Dendritic cell treated with granulocyte-macrophage colony-stimulating factor and Interleukin-4, amounts not matched to agents 40 ng/mL and 50 ng/mL, for 4 days (primary cell): ENCODE measurements at regions of chr3 and their contacts with region 1.

Region 1: DNA sequence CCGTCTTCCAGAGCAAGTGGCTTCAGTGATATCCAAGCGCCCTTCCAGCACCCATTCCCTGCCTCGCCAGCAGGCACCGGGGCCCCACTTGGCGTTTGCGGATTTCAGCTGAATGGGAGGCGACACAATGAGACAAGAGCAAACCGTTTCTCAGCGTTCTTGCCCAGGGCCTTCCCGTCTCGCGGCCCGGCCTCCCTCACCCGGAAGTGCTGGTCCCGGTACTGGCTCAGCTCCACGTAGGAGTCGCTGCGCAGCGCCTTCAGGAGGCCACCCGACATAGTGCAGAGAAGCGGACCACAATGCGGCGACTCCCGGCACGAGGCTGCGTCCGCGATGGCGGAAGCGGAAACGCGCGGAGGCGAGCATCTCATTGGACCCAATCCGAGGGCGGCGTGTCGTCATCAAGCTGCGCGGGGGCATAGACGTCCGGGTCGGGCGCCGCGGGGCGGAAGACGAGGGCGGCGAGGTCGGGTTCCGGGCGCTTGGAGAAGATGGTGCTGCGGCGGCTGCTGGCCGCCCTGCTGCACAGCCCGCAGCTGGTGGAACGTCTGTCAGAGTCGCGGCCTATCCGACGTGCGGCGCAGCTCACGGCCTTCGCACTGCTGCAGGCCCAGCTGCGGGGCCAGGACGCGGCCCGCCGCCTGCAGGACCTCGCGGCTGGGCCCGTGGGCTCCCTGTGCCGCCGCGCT is at the start of gene NCBP2:
- H3K4me3 Mint-ChIP-seq: peak within 1 kb of the TSS; percentile 87
- H3K27ac Mint-ChIP-seq: peak within 1 kb of the TSS; percentile 90
- H3K4me1 Mint-ChIP-seq: peaks cover 55% of the 10 kb centered on the region
- H3K27me3 Mint-ChIP-seq: no peaks in the 10 kb centered on the region

Region 2: DNA sequence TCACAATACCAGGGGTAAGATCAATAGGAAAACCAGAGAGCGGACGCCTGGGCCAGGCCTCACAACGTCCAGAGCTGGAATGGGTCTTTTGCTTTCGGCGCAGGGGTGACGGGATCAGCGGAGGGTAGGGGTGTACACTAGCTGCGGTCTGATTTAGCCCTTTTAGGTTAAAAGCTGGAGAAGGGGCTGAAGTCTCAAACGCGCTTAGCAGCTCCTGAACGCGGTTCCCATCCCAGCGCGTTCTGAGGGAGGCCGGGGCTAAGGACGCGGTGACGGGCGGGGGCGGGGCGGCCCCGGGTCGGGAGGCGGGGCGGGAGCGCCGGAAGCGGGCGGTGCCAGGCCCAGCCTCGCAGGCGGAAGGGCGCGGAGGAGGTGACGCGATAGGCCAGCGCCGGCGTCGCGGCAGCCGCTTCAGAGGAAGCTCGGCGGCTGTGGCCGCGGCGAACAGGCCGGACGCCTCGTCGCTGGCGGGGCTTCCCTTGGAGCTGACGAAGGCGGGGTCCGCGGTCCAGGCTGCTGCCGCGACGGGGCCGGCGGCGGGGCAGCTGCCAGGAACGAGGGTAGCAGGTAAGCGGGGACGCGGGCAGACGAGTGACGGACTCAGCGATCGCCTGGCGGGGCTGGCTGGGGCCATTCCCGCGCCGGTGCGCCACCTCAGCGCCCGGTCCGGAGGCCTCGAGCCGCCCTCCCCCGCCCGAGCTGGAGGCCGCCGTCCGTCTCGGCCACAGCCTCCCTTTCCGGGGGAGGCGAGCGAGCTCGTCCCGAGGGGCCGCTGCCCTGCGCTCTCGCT is 74.7 kb before region 1 on chr3 and contains the start of gene SENP5:
- intact Hi-C with region 1: loop called (anchors 1 kb)
- H3K4me3 Mint-ChIP-seq: peak within 1 kb of the TSS; percentile 94
- H3K27ac Mint-ChIP-seq: peak within 1 kb of the TSS; percentile 91
- H3K4me1 Mint-ChIP-seq: peaks cover 21% of the 10 kb centered on the region
- H3K27me3 Mint-ChIP-seq: no peaks in the 10 kb centered on the region

Region 3: DNA sequence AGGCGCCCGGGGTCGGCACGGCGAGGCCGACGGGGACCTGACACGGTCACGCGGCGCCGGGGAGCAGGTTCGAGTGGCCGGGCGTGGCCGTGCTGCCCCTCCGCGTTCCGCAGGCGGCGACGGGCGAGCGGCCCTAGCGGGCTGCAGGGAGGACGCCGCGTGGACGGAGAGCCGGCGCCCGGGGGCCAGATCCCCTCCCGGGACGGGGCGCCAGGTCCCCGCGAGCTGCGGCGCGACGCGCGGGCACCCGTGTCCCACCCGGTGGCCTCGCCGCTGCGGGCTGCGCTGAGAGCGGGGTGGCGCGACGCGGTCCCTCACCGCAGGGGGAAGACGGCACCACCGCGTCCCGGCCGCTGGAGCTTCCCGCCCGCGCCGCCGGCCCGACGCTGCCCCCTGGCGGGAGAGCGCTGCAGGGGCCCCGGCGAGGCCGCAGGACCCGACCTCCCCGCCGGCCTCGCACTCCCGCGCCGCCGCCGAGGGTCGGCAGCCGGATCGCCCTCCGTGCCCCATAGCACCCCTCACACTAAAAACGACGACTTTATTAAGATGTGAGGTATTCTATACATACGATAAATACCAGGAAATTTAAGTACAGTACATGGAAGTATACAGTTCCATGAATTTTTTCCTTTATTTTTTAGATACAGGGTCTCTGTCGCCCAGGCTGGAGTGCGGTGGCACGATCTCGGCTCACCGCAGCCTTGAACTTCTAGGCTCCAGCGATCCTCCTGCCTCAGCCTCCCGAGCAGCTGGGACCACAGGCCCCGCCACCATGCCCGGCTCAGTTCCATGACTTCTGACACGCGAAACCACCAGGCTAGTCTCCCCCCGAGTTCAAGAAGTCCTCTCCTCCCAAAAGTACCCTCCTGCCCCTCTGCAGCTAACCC is 27.5 kb after region 1 on chr3:
- intact Hi-C with region 1: loop called (anchors 2 kb)
- H3K4me3 Mint-ChIP-seq: peak overlapping the region; percentile 46
- H3K27ac Mint-ChIP-seq: peak overlapping the region; percentile 75
- H3K4me1 Mint-ChIP-seq: peaks cover 34% of the 10 kb centered on the region
- H3K27me3 Mint-ChIP-seq: peaks cover 15% of the 10 kb centered on the region

Region 4: GRCh38 chr3:196995646-196996371 is 53.4 kb after region 1 on chr3:
- intact Hi-C with region 1: no loop called
- H3K4me3 Mint-ChIP-seq: no peak overlapping the region
- H3K27ac Mint-ChIP-seq: no peak overlapping the region
- H3K4me1 Mint-ChIP-seq: peaks cover 10% of the 10 kb centered on the region
- H3K27me3 Mint-ChIP-seq: no peaks in the 10 kb centered on the region